ENCODE measurements at regions of chr7 and their contacts with region 1.

Region 1: DNA sequence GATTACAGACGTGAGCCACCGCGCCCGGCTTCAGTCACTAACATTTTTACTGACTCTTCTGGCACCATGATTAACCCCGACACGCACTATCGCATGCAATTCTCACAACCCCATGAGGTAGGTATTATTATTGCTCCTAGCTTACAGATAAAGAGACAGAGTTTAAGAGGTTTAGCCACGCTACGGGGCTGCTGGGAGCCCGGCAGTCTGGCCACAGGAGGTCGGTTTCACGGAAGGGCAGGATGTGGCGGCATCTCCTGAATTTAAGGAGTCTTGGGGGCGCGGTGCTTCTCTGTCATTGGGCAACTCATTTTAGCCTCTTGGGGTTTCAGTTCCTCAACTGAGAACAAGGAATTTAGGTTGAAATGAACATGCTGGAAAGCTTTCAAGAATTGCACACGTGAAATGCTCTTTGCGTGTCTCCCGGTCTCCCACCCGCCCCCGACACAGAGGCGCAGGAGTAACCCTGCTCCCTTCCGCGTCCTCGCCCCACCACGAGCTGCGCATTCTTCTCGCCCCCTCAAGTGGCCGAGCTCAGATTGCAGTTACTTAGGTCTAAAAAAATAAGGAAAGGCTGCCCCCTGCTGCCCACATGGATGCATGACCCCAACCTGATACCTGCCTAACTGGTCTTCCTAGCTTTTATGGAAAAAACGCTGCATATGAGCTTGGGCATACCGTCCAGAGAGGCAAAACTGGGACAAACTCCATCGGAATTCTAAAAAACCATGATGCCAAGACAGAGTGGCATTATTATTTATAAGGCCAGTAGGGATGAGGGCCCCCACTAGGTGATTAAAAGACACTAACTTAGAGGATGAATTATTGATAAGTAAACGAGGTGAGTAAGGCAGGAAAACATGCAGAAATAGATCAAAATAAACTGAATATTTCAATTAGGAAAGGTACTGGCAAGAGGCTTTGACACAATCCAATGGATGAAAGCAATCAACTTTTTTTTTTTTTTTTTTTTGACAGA is 12.4 kb downstream of the PRSS2 start:
- DNase-seq: peak; percentile 90
- H3K4me3 ChIP-seq: peak overlapping the region in 3 of 4 donors; percentile 27 to 33 (median 28)
- H3K27ac ChIP-seq: no peak overlapping the region
- H3K4me1 ChIP-seq: peaks cover 0 to 5% (median 2%) of the 10 kb centered on the region in 4 donors
- H3K27me3 ChIP-seq: peaks cover 0 to 9% (median 5%) of the 10 kb centered on the region in 3 donors
- CTCF ChIP-seq: peak; percentile 80 to 89 (median 86)
- EP300 ChIP-seq: no peak
- POLR2A ChIP-seq: no peak

Region 2: DNA sequence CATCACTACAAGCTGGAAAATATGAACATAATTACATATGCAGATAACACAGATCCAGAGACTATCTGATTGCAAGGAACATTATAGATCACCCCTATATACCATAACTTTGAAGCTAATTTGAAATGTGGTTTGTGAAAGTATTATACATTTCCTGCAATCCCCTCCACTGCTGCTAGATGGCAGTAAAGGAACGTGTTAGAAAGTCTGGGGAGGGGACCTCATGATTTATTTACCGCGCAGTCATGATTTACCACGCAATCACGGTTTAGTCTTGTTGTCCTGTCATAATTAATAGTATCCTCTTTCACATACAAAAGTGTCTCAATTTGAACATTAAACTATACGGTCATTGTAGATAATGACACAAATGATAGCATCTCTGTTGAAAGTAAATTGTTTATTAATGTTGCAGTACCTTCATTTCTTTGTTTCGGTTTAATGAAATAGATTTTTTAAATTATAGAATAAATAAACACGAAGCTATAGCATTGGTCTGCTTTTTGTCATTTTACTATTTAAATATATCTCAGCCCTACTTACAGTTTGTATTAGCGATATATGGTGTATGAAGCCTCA is 179.3 kb before region 1 on chr7:
- intact Hi-C with region 1: loop called (anchors 10 kb)
- DNase-seq: no peak
- H3K4me3 ChIP-seq: no peak overlapping the region
- H3K27ac ChIP-seq: no peak overlapping the region
- H3K4me1 ChIP-seq: no peaks in the 10 kb centered on the region
- H3K27me3 ChIP-seq: no peaks in the 10 kb centered on the region
- CTCF ChIP-seq: peak in 3 of 4 experiments; percentile 55 to 65 (median 62)
- EP300 ChIP-seq: no peak
- POLR2A ChIP-seq: no peak

Region 3: GRCh38 chr7:142632291-142633134 is 150.7 kb before region 1 on chr7:
- intact Hi-C with region 1: loop called (anchors 1 kb)
- DNase-seq: no peak
- H3K4me3 ChIP-seq: no peak overlapping the region
- H3K27ac ChIP-seq: no peak overlapping the region
- H3K4me1 ChIP-seq: peaks cover 0 to 7% (median 2%) of the 10 kb centered on the region in 4 donors
- H3K27me3 ChIP-seq: peaks cover 0 to 10% (median 0%) of the 10 kb centered on the region in 3 donors
- CTCF ChIP-seq: peak; percentile 36 to 75 (median 50)
- EP300 ChIP-seq: no peak
- POLR2A ChIP-seq: no peak

Region 4: DNA sequence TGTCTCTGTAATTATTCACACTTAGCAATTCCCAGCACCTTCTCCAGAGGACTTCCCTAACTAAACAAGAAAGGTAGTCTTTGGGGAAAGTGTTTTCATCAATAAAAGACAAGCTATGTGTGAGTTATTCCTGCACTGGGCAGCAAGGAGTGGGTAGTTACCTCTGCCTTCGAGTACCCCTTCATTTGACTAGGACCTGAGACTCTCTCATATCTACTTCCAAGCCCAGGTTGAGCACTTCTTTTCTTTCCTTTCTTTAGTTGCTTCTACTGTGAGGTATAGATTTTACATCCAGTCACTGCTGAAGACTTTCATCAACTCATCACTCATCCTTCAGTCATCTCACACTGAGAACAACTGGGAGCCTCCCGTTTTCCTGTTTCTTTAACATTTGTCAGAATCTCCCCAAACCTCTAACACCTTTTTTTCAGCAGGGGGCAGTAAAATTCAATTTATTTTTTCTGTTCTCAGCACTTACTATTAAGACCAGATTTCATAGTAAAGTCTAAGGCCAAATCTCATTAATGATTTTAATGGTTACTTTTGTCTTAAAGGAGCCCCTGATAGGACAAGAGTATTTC is 114.0 kb before region 1 on chr7:
- intact Hi-C with region 1: loop called (anchors 2 kb)
- DNase-seq: no peak
- H3K4me3 ChIP-seq: no peak overlapping the region
- H3K27ac ChIP-seq: no peak overlapping the region
- H3K4me1 ChIP-seq: no peaks in the 10 kb centered on the region
- H3K27me3 ChIP-seq: no peaks in the 10 kb centered on the region
- CTCF ChIP-seq: peak in 1 of 4 experiments; percentile 23
- EP300 ChIP-seq: no peak
- POLR2A ChIP-seq: no peak